ENCODE measurements at regions of chr4 and their contacts with region 1.

Region 1: GRCh38 chr4:54971474-54971950 is 153.9 kb downstream of the KDR start:
- ATAC-seq: peak; percentile 67 to 93 (median 84)
- H3K4me3 ChIP-seq: no peak overlapping the region
- H3K27ac ChIP-seq: no peak overlapping the region
- H3K4me1 ChIP-seq: peaks cover 0 to 16% of the 10 kb centered on the region in 2 donors

Region 2: DNA sequence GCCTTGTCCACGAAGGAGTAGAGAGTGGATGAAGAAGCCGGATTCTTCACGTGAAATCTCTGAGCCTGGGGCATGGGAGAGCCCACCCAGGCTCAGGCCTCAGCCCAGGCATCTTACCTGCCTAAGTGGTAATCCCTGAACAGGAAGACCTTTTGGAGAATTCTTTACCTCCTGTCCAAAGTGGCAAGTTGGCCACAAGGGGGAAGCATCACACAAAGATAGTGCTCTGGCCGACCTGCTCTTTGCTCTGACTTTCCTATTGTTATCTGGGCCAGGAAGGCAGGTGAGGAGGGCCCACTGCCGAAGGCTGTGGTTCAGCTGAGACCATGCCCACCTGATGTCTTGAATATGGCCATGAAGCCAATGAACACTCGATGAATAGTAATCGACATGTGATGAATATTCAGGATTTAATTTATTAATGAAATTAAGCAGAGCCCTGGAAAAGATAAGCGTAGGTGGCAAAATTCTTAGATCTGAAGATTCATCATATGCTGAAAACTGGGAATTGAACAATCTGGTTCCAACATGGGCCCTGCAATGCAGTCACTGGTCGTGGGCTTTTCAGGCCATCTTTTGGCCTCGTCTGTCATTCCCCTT is 648.6 kb before region 1 on chr4:
- in situ Hi-C with region 1: loop called in 3 of 9 experiments (anchors 25 kb)
- ATAC-seq: peak; percentile 76 to 95 (median 86)
- H3K4me3 ChIP-seq: no peak overlapping the region
- H3K27ac ChIP-seq: no peak overlapping the region
- H3K4me1 ChIP-seq: peaks cover 0 to 6% of the 10 kb centered on the region in 2 donors

Region 3: GRCh38 chr4:55272589-55272988 is 301.1 kb after region 1 on chr4:
- in situ Hi-C with region 1: no loop called
- ATAC-seq: peak in 2 of 8 experiments; percentile 46 to 69
- H3K4me3 ChIP-seq: no peak overlapping the region
- H3K27ac ChIP-seq: no peak overlapping the region
- H3K4me1 ChIP-seq: no peaks in the 10 kb centered on the region

Region 4: DNA sequence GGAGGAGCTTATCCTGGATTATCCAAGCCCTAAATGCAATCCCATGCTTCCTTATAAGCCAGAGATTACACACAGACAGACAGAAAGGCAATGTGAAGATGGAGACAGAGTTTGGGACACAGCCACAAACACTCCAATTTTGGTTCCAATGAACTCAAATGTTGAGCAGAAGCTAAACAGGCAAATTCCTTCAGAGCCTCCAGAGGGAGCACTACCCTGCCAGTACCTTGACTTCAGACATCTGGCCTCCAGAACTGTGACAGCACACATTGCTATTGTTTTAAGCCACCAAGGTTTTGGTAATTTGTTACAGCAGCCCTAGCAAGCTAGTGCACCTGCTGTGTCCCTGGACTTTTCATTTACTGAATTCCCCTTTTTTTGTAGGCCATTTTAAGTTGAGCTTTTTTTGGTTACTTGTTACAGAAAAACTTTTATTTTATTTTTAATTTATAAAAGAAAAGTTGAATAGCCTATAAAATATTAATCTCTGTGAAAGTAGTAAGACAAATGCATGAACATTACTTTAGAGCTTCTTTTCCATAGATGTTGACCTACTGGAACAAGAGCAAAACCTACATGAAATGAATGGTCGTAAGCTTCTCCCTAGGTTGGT is 341.1 kb after region 1 on chr4:
- in situ Hi-C with region 1: loop called in 3 of 9 experiments (anchors 25 kb)
- ATAC-seq: peak in 3 of 8 experiments; percentile 79 to 87 (median 87)
- H3K4me3 ChIP-seq: no peak overlapping the region
- H3K27ac ChIP-seq: no peak overlapping the region
- H3K4me1 ChIP-seq: no peaks in the 10 kb centered on the region

Region 5: DNA sequence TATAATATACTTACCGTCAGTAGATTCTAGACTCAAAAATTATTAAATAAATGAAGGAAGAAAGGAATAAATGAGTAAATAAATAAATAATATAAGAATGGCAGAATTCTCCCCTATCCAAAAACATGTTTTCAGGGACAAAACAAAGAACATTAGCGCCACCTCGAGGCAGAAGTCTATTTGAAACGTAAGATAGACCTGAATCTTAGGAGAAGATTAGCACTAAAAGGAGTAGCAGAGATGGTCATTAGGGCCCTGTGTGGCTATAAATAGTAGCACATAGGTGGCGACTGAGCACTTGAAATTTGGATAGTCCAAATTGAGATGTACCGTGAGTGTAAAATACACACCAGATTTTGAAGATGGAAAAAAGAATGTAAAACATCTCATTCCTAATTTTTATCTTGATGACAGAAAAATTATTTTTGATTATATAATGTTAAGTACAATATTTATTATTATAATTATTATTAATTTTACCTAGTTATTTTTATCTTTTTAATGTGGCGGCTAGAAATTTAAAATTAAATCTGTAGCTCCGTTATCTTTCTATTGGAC is 350.3 kb after region 1 on chr4:
- in situ Hi-C with region 1: loop called in 4 of 9 experiments (anchors 10 to 25 kb)
- ATAC-seq: peak in 5 of 8 experiments; percentile 31 to 83 (median 56)
- H3K4me3 ChIP-seq: no peak overlapping the region
- H3K27ac ChIP-seq: no peak overlapping the region
- H3K4me1 ChIP-seq: peaks cover 0 to 4% of the 10 kb centered on the region in 2 donors

Region 6: GRCh38 chr4:55475394-55476243 is 504.1 kb after region 1 on chr4:
- in situ Hi-C with region 1: no loop called
- ATAC-seq: peak in 1 of 8 experiments; percentile 67
- H3K4me3 ChIP-seq: no peak overlapping the region
- H3K27ac ChIP-seq: no peak overlapping the region
- H3K4me1 ChIP-seq: no peaks in the 10 kb centered on the region

Region 7: DNA sequence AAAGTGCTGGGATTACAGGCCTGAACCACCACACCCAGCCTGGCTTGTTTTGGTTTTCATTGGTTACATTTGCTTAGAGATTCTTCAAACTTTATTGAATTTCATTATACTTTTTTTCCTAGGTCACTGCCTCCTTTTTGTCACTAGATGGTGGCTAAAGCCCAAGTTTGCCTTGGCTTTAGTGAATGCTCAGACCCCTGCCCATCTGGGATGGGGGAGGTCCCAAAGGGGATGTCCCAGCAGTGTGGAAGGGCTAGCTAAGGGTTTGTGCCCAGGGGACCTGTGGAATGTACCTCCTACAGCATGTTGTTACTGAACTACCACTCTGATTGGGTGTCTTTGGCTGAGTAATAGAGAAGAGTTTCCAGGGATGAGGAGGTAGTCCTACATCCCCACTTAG is 1035.6 kb after region 1 on chr4:
- in situ Hi-C with region 1: no loop called
- ATAC-seq: no peak
- H3K4me3 ChIP-seq: no peak overlapping the region
- H3K27ac ChIP-seq: no peak overlapping the region
- H3K4me1 ChIP-seq: no peaks in the 10 kb centered on the region